ENCODE measurements at regions of chr14 and their contacts with region 1.

Region 1: DNA sequence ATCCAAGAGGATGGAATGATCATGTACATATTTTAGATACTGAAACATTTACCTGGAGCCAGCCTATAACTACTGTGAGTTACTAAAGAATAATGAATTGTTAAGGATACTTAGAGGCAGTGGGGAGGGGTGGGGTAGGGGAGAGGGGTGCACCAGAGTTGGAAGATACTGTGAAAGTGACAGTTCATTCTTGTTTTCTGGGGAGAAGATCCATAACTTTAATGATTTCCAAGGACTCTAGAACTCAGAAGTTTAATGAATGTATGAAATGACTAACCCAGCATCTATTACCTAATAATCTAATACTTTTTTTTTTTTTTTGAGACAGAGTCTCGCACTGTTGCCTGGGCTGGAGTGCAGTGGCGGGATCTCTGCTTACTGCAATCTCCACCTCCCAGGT is 10.5 kb downstream of the KLHDC2 start:
- DNase-seq: no peak
- H3K4me3 ChIP-seq: no peak overlapping the region
- H3K27ac ChIP-seq: no peak overlapping the region
- H3K4me1 ChIP-seq: no peaks in the 10 kb centered on the region
- H3K27me3 ChIP-seq: no peaks in the 10 kb centered on the region
- CTCF ChIP-seq: no peak

Region 2: DNA sequence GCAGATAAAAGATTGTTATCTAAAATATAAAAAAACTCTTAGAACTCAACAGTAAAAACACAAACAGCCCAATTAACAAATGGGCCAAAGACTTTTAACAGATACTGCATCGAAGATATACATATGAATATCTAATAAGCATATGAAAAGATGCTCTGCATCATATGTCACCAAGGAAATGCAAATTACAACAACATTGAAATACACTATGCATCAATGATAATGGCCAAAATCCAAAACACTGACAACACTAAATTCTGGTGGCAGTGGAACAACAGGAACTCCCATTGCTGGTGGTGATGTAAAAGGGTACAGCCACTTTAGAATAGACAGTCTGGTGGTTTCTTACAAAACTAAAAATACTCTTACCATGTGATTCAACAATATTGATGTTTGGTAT is 30.4 kb after region 1 on chr14:
- CTCF ChIA-PET with region 1: no interaction called
- POLR2A ChIA-PET with region 1: no interaction called
- intact Hi-C with region 1: loop called (anchors 5 kb)
- DNase-seq: no peak
- H3K4me3 ChIP-seq: no peak overlapping the region
- H3K27ac ChIP-seq: no peak overlapping the region
- H3K4me1 ChIP-seq: no peaks in the 10 kb centered on the region
- H3K27me3 ChIP-seq: no peaks in the 10 kb centered on the region
- CTCF ChIP-seq: no peak

Measured in PC-9 (cell line).